ENCODE measurements at regions of chr4 and their contacts with region 1.

Region 1: DNA sequence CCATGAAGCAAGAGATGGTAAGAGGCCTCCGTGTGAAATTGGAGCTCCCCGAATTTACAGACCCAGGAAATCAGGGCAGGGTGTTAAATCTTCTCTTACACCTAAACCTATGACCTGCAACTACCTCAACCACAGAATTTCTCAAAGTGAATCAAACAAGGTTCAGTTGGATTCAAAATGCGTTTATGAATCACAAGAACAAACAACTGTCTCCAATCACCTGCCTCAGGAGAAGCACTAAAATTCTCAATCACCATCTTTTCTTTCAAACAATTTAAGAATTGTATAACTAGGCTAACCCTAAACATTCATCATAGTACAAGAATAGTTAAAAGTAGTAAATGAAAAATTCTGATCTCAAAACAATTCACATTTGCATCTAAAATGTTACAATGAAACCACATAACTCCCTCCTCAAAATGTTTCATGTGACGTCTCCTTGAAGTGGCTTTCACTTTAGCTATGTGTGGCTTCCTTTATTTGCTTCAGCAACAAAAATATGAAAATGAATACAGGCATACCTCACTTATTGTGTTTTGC is 19.2 kb downstream of the PPP3CA start:
- DNase-seq: peak; percentile 37
- H3K4me3 Mint-ChIP-seq: peak overlapping the region; percentile 63
- H3K27ac Mint-ChIP-seq: peak overlapping the region; percentile 65
- H3K4me1 Mint-ChIP-seq: peaks cover 48% of the 10 kb centered on the region
- H3K27me3 Mint-ChIP-seq: peaks cover 2% of the 10 kb centered on the region

Region 2: DNA sequence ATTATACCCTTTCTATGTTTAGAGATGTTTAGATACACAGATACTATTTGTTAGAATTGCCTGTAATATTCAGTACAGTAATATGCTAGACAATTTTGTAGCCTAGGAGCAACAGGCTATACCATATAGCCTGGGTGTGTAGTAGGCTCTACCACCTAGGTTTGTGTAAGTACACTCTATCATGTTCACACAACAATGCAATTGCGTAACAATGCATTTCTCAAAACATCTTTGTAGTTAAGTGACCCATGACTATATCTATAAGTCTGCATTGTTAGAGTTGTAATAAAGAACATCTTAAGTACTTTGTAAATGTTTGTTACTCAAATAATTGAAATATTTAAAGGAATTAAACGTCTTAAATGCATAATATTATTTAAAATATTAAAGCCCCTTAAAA is 360.1 kb before region 1 on chr4:
- CTCF ChIA-PET with region 1: no interaction called
- POLR2A ChIA-PET with region 1: no interaction called
- intact Hi-C with region 1: no loop called
- DNase-seq: no peak
- H3K4me3 Mint-ChIP-seq: no peak overlapping the region
- H3K27ac Mint-ChIP-seq: no peak overlapping the region
- H3K4me1 Mint-ChIP-seq: no peaks in the 10 kb centered on the region
- H3K27me3 Mint-ChIP-seq: peaks cover 5% of the 10 kb centered on the region

Region 3: DNA sequence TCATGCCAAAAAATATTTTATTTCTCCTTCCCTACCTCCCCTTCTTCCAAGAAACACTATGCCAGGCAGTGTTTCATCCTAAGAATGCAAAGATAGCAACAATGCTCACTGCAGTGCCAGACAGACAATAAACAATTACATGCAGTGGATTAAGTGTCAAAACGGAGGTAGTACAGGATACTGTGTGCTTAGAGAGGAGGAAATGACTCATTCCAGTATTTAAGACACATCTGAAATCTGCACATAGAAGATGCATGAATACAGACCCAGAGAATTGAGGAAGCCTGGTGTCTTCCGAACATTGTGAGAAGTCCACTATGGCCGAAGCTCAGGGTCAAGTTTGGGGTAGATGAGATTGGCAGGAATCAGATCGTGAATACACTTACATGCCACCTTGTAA is 307.2 kb before region 1 on chr4:
- CTCF ChIA-PET with region 1: no interaction called
- POLR2A ChIA-PET with region 1: no interaction called
- intact Hi-C with region 1: loop called (anchors 2 kb)
- DNase-seq: peak; percentile 13
- H3K4me3 Mint-ChIP-seq: peak overlapping the region; percentile 12
- H3K27ac Mint-ChIP-seq: peak overlapping the region; percentile 50
- H3K4me1 Mint-ChIP-seq: peaks cover 58% of the 10 kb centered on the region
- H3K27me3 Mint-ChIP-seq: no peaks in the 10 kb centered on the region

Region 4: GRCh38 chr4:101086801-101087586 is 241.1 kb before region 1 on chr4:
- CTCF ChIA-PET with region 1: no interaction called
- POLR2A ChIA-PET with region 1: no interaction called
- intact Hi-C with region 1: no loop called
- DNase-seq: no peak
- H3K4me3 Mint-ChIP-seq: no peak overlapping the region
- H3K27ac Mint-ChIP-seq: no peak overlapping the region
- H3K4me1 Mint-ChIP-seq: no peaks in the 10 kb centered on the region
- H3K27me3 Mint-ChIP-seq: no peaks in the 10 kb centered on the region

Region 5: GRCh38 chr4:101155368-101155767 is 172.8 kb before region 1 on chr4:
- CTCF ChIA-PET with region 1: no interaction called
- POLR2A ChIA-PET with region 1: interaction called, 3 read pairs
- intact Hi-C with region 1: loop called (anchors 2 kb)
- DNase-seq: no peak
- H3K4me3 Mint-ChIP-seq: no peak overlapping the region
- H3K27ac Mint-ChIP-seq: no peak overlapping the region
- H3K4me1 Mint-ChIP-seq: peaks cover 45% of the 10 kb centered on the region
- H3K27me3 Mint-ChIP-seq: no peaks in the 10 kb centered on the region

Region 6: GRCh38 chr4:101205916-101206315 is 122.2 kb before region 1 on chr4:
- CTCF ChIA-PET with region 1: no interaction called
- POLR2A ChIA-PET with region 1: interaction called, 3 read pairs
- intact Hi-C with region 1: loop called (anchors 1 kb)
- DNase-seq: peak; percentile 60
- H3K4me3 Mint-ChIP-seq: no peak overlapping the region
- H3K27ac Mint-ChIP-seq: peak overlapping the region; percentile 15
- H3K4me1 Mint-ChIP-seq: peaks cover 22% of the 10 kb centered on the region
- H3K27me3 Mint-ChIP-seq: no peaks in the 10 kb centered on the region

Region 7: DNA sequence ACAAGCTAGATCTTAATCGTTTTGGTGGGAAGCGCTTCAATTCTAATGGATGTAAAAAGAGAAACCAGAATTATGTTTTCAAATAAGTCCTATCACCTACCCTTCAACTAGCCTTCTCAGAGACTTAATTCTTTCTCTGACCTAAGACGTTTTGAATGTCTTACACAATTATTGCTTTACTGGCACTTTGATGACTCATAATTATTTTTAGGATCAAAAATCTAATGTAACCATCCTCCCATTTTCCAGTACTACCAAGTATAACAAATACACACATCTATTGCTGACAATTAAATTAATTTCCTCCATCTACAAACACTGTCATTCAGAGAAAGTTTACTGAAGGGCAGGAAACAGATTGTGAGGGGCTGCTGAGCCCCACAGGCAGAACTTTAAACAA is 89.4 kb before region 1 on chr4:
- CTCF ChIA-PET with region 1: no interaction called
- POLR2A ChIA-PET with region 1: no interaction called
- intact Hi-C with region 1: no loop called
- DNase-seq: no peak
- H3K4me3 Mint-ChIP-seq: no peak overlapping the region
- H3K27ac Mint-ChIP-seq: no peak overlapping the region
- H3K4me1 Mint-ChIP-seq: peaks cover 17% of the 10 kb centered on the region
- H3K27me3 Mint-ChIP-seq: no peaks in the 10 kb centered on the region

Region 8: DNA sequence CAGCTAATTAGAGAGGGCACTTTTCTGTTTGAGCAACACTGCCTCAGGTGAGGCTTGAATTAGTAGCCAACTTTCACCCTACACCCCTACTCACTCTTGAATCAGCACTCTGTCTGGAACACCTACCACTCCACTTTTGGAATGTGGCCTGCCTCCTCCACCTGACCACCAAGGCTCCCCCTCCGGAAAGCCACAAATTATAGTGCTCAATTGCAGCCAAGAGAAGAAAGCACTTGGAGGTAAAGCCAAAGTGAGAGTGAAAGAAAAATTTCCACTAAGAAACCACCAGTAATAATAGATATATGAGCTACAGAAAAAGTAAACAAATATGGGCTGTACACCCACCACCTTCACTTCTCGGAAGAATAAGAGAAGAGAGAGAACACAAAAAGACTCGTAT is 21.9 kb before region 1 on chr4:
- CTCF ChIA-PET with region 1: interaction called, 3 read pairs
- POLR2A ChIA-PET with region 1: no interaction called
- intact Hi-C with region 1: loop called (anchors 2 kb)
- DNase-seq: peak; percentile 18
- H3K4me3 Mint-ChIP-seq: peak overlapping the region; percentile 30
- H3K27ac Mint-ChIP-seq: no peak overlapping the region
- H3K4me1 Mint-ChIP-seq: peaks cover 42% of the 10 kb centered on the region
- H3K27me3 Mint-ChIP-seq: no peaks in the 10 kb centered on the region